Dorsolateral prefrontal cortex (tissue), 120 donors: ENCODE measurements at regions of chr11 and their contacts with region 1.

Region 1: DNA sequence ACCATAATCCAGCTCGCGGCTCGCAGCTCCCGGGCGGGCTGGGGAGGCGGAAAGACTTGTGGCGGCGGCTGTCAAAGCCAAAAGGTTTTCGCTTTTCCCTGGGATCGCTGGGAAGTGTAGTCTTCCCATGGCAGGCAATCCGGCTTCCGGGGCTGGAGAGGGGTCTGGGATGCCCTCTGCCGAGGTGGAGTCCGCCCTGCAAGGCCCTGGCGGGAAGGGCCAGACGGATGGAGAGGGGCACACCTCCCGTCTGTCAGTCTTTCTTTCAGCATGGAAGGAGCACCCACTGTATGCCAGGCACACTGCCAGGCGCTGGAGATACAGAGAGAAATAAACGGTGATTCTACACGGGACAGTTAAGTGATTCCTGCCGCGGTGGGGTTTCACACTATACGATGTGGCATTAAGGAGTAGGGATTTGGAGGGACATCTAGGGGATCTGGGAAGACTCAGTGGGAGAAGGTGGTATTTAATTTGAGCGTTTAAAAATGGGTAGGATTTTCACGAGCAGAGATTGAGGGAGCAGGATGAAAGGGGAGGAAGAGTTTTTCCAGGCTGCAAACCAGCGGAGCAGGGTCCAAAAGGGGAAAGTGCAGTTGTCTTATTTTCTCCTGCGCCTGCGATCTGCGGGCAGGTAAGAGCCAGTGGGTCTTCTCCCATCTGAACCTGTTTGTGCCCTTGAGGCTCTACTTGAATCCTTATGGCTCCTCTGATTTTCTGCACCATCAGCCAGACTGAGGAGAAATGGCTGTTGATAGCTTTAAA is at the start of gene BACE1:
- DNase-seq: peak; percentile 74 to 95 (median 92)
- H3K4me3 ChIP-seq: peak within 1 kb of the TSS; percentile 66 to 96 (median 87)
- H3K27ac ChIP-seq: peak within 1 kb of the TSS in 56 of 59 donors; percentile 7 to 89 (median 70)
- H3K27me3 ChIP-seq: no peaks in the 10 kb centered on the region
- CTCF ChIP-seq: peak in 55 of 56 donors; percentile 42 to 85 (median 66)
- total RNA-seq, gene BACE1: 61.2 to 214 (median 97.2) TPM

Region 2: DNA sequence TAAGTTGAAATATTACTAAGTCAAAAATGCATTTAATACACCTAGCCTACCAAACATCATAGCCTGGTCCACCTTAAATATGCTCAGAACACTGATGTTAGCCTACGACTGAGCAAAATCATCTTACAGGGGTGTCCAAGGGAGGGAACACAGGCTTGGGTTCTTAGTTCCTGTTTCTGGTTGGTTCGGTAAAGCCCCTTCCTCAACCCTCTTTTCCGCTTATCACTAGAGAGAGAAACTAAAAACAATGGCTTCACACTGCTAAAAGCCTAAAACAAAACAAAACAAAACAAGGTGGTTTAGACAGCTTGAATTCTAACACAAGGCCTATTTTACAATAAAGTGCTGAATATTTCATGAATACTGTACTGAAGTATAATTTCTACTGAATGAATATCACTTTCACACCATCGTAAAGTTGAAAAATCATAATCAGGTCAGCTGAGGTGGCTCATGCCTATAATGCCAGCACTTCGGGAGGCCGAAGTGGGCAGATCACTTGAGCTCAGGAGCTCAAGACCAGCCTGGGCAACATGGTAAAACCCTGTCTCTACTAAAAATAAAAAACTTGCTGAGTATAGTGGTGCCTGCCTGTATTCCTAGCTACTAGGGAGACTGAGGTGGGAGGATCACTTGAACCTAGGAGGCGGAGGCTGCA is 336.1 kb before region 1 on chr11:
- intact Hi-C with region 1: no loop called
- DNase-seq: no peak
- H3K4me3 ChIP-seq: peak overlapping the region in 7 of 59 donors; percentile 4 to 36 (median 11)
- H3K27ac ChIP-seq: peak overlapping the region in 56 of 59 donors; percentile 1 to 96 (median 64)
- H3K27me3 ChIP-seq: no peaks in the 10 kb centered on the region
- CTCF ChIP-seq: no peak

Region 3: GRCh38 chr11:117327567-117328374 is 11.4 kb after region 1 on chr11 and contains the start of gene CEP164:
- intact Hi-C with region 1: loop called in 1 of 2 experiments (anchors 1 kb)
- DNase-seq: peak; percentile 90 to 98 (median 97)
- H3K4me3 ChIP-seq: peak within 1 kb of the TSS; percentile 54 to 96 (median 85)
- H3K27ac ChIP-seq: peak within 1 kb of the TSS; percentile 33 to 95 (median 85)
- H3K27me3 ChIP-seq: no peaks in the 10 kb centered on the region
- CTCF ChIP-seq: peak in 23 of 56 donors; percentile 6 to 53 (median 21)
- total RNA-seq, gene CEP164: 22.7 to 64.8 (median 39.7) TPM